ENCODE measurements at regions of chr6 and their contacts with region 1.

Region 1: DNA sequence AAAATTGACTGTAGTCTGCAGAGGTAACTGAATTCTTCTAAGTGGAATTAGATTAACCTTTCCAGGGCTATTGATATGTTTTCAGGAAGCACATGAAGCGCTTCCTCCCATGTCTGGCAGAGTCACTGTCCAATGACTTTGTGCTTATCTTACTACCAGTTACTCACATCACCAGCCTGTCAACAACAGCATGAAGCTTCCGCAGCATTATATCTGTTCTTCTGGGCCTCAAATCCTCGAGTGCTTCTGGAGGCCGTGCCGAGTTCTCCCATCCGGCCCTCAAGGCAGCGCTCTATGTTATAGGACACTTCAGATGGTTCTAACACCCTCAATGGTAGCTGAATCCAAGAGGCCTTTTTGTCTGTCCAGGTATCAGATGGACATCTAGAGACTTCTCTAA is 33.2 kb downstream of the PSMG4 start:
- DNase-seq: no peak
- H3K4me3 ChIP-seq: no peak overlapping the region
- H3K27ac ChIP-seq: no peak overlapping the region
- H3K4me1 ChIP-seq: no peaks in the 10 kb centered on the region
- H3K27me3 ChIP-seq: no peaks in the 10 kb centered on the region
- CTCF ChIP-seq: no peak
- POLR2A ChIP-seq: no peak

Region 2: DNA sequence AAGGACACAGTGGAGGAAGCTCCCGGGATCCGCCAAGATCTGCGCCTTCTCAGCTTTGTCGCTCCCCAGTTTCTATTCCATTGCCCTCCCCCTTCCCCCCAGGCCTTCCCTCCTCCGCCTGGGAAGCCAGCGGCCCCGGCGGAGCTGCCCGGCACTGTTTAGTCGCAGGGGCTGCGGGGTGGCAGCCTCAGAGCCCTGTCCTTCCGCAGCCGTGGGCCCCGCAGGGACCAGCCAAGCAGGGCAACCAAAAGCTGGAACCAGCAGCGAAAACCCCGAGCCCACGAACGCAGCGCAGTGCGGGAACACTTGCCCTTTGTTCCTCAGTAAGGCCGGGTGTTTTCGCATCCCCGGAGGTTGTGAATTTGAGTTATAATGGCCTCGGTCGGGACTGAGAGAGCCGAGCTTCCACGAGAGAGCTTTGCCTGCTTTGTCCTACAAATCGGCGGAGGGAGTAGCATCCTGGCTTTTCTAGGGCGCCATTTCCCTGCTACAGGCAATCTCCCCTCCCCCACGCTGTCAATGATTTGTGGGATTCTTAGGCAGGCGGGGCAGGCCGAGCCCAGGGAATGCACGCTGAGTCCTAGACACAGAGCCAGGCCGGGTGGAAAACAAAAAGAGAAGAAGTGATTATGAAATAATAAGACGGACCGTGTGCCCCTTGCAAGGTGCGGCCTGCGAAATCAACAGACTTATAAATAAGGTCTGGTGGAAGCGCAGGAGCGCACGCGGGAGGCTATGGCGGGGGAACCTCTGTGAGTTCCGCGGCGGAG is 60.6 kb before region 1 on chr6:
- intact Hi-C with region 1: no loop called
- DNase-seq: peak in 1 of 2 donors; percentile 65
- H3K4me3 ChIP-seq: peak overlapping the region; percentile 59 to 75 (median 60)
- H3K27ac ChIP-seq: peak overlapping the region; percentile 80 to 85
- H3K4me1 ChIP-seq: peaks cover 11 to 25% of the 10 kb centered on the region in 2 donors
- H3K27me3 ChIP-seq: peaks cover 5 to 41% of the 10 kb centered on the region in 2 donors
- CTCF ChIP-seq: no peak
- POLR2A ChIP-seq: no peak

Region 3: GRCh38 chr6:3324262-3324942 is 32.4 kb after region 1 on chr6:
- intact Hi-C with region 1: loop called (anchors 1 kb)
- DNase-seq: no peak
- H3K4me3 ChIP-seq: no peak overlapping the region
- H3K27ac ChIP-seq: peak overlapping the region; percentile 29 to 74
- H3K4me1 ChIP-seq: peaks cover 0 to 7% of the 10 kb centered on the region in 2 donors
- H3K27me3 ChIP-seq: no peaks in the 10 kb centered on the region
- CTCF ChIP-seq: no peak
- POLR2A ChIP-seq: no peak

Region 4: GRCh38 chr6:3403238-3404173 is 111.5 kb after region 1 on chr6:
- intact Hi-C with region 1: no loop called
- DNase-seq: no peak
- H3K4me3 ChIP-seq: no peak overlapping the region
- H3K27ac ChIP-seq: peak overlapping the region; percentile 78 to 80
- H3K4me1 ChIP-seq: peaks cover 0 to 7% of the 10 kb centered on the region in 2 donors
- H3K27me3 ChIP-seq: no peaks in the 10 kb centered on the region
- CTCF ChIP-seq: peak in 1 of 3 donors; percentile 8
- POLR2A ChIP-seq: no peak

Region 5: GRCh38 chr6:3929281-3929798 is 637.4 kb after region 1 on chr6:
- intact Hi-C with region 1: no loop called
- DNase-seq: no peak
- H3K4me3 ChIP-seq: no peak overlapping the region
- H3K27ac ChIP-seq: peak overlapping the region in 1 of 2 donors; percentile 23
- H3K4me1 ChIP-seq: no peaks in the 10 kb centered on the region
- H3K27me3 ChIP-seq: no peaks in the 10 kb centered on the region
- CTCF ChIP-seq: no peak
- POLR2A ChIP-seq: no peak

Measured in breast epithelium (tissue), 4 donors.